ENCODE measurements at regions of chr6 and their contacts with region 1.

Region 1: GRCh38 chr6:136792410-136793262 is at the start of gene MAP3K5:
- DNase-seq: peak; percentile 97 to 99
- ATAC-seq: peak; percentile 94
- H3K4me3 ChIP-seq: peak within 1 kb of the TSS; percentile 72 to 93
- H3K27ac ChIP-seq: peak within 1 kb of the TSS; percentile 89 to 97
- H3K4me1 ChIP-seq: no peaks in the 10 kb centered on the region
- H3K27me3 ChIP-seq: no peaks in the 10 kb centered on the region
- total RNA-seq, gene MAP3K5: 37.6 to 48.4 TPM

Region 2: GRCh38 chr6:136582711-136583471 is 209.7 kb before region 1 on chr6:
- intact Hi-C with region 1: loop called (anchors 2 kb)
- DNase-seq: no peak
- ATAC-seq: peak; percentile 80
- H3K4me3 ChIP-seq: no peak overlapping the region
- H3K27ac ChIP-seq: peak overlapping the region; percentile 63 to 78
- H3K4me1 ChIP-seq: peaks cover 2 to 8% of the 10 kb centered on the region in 2 donors
- H3K27me3 ChIP-seq: no peaks in the 10 kb centered on the region

Region 3: DNA sequence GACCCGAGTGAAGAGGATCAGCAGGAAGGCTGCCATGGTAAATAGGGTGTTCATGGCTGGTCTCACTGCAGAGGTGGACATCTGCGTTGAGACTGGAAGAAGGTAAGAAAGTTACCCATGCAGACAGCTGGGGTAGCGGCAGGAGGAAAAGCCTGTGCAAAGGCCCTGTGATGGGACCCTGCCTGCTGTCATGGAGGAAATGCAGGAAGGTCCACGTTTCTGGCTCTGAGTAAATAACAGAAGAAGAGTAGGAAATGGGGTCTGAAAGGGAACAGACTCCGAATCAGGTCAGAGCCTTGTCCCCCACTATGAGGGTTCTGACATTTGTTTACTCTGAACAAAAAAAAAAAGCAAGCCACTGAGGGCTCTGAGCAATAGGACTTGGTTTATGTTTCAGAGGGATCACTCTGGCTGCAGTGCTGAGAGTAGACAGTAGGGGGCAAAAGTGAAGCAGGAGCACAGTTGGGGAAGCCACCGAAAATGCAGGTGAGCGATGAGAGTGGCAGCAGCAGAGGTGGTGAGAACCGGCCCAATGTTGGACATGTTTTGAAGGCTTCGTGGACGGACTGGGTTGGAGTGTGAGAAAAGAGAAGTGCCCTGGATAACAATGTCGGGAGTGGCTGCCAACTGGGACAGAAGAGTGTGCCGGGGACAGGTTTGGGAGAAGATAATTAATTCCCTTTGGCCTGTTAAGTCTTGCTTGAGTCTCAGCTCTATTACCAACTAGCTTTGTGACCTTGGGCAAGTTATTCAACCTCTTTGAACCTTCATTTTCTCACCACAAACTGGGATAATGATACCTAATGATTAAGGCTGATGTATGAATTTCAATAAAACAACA is 184.5 kb before region 1 on chr6:
- intact Hi-C with region 1: loop called in 1 of 2 experiments (anchors 1 kb)
- DNase-seq: peak in 1 of 2 donors; percentile 73
- ATAC-seq: peak; percentile 61
- H3K4me3 ChIP-seq: no peak overlapping the region
- H3K27ac ChIP-seq: peak overlapping the region; percentile 6 to 51
- H3K4me1 ChIP-seq: peaks cover 3 to 4% of the 10 kb centered on the region in 2 donors
- H3K27me3 ChIP-seq: no peaks in the 10 kb centered on the region

Region 4: DNA sequence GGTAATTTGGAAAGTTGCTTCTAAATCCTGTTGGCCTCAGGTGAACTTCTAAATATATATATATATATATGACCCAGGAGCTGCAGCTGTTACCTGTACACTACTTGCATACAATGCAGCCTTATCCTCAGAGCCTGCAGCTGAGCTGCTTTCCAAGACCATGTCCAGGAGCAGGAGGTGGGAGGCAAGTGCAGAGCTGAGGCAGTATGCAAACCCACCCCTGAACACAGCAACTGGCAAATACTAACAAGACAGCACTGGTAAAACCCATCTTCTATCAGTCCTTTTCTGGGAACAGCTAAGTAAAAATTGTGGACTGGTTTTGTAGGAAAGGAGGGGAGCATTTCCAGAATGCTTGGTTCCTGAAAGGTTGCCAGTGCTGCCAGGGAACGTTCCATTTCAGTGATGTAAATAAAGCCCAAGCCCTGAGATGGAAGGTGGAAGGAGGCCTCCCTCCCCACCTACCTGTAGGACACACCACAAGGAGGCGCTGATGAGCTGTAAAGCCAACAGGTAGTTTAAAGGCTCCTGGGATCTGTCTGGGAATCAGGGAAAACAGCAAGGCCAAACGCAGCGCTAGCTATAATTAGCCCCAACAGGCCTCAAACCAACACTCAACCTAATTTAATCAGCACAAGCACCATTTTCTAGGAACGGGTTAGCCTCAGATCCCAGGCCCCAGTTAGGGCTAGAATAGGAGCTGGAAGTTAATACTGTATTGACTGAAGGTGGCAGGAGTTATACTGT is 148.6 kb before region 1 on chr6:
- intact Hi-C with region 1: loop called (anchors 1 kb)
- DNase-seq: peak; percentile 94 to 96
- ATAC-seq: peak; percentile 94
- H3K4me3 ChIP-seq: no peak overlapping the region
- H3K27ac ChIP-seq: peak overlapping the region; percentile 16 to 83
- H3K4me1 ChIP-seq: peaks cover 0 to 8% of the 10 kb centered on the region in 2 donors
- H3K27me3 ChIP-seq: no peaks in the 10 kb centered on the region

Region 5: DNA sequence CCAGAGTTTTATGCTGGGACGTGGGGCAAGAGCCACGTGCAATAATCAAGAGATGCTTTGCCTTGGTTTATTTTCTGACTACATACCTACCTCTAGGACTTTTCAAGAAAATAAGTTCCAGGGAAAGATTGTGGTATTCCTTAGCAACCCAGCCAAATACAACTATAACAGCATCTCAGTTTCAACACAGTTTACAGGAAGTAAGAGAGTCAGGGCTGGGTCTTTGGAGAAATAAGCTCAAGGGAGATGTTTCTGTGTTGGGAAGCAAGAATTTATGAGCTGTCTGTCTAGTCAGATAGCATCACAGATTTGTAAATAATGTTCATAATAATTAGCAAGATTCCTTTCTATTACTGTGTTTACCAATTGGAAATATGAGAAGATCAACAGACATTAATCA is 35.5 kb before region 1 on chr6:
- intact Hi-C with region 1: loop called in 1 of 2 experiments (anchors 5 kb)
- DNase-seq: no peak
- ATAC-seq: no peak
- H3K4me3 ChIP-seq: no peak overlapping the region
- H3K27ac ChIP-seq: peak overlapping the region in 1 of 2 donors; percentile 83
- H3K4me1 ChIP-seq: peaks cover 9 to 11% of the 10 kb centered on the region in 2 donors
- H3K27me3 ChIP-seq: no peaks in the 10 kb centered on the region

Region 6: GRCh38 chr6:136822376-136823127 is 29.9 kb after region 1 on chr6 and contains the start of gene PEX7:
- intact Hi-C with region 1: loop called in 1 of 2 experiments (anchors 2 kb)
- DNase-seq: peak; percentile 94 to 95
- ATAC-seq: peak; percentile 96
- H3K4me3 ChIP-seq: peak within 1 kb of the TSS; percentile 43 to 89
- H3K27ac ChIP-seq: peak within 1 kb of the TSS in 1 of 2 donors; percentile 91
- H3K4me1 ChIP-seq: no peaks in the 10 kb centered on the region
- H3K27me3 ChIP-seq: no peaks in the 10 kb centered on the region
- total RNA-seq, gene PEX7: 4.2 to 5.5 TPM

Measured in aorta (tissue), 5 donors.